Ascending aorta (tissue), 2 donors: ENCODE measurements at regions of chr9 and their contacts with region 1.

Region 1: GRCh38 chr9:38392235-38393127 is at the start of gene ALDH1B1:
- DNase-seq: peak; percentile 58 to 94
- H3K4me3 ChIP-seq: peak within 1 kb of the TSS; percentile 84 to 87
- H3K27ac ChIP-seq: peak within 1 kb of the TSS; percentile 98 to 99
- H3K4me1 ChIP-seq: peaks cover 31 to 47% of the 10 kb centered on the region in 2 donors
- H3K27me3 ChIP-seq: no peaks in the 10 kb centered on the region
- CTCF ChIP-seq: peak in 1 of 3 experiments; percentile 13
- total RNA-seq, gene ALDH1B1: 85.5 TPM

Region 2: DNA sequence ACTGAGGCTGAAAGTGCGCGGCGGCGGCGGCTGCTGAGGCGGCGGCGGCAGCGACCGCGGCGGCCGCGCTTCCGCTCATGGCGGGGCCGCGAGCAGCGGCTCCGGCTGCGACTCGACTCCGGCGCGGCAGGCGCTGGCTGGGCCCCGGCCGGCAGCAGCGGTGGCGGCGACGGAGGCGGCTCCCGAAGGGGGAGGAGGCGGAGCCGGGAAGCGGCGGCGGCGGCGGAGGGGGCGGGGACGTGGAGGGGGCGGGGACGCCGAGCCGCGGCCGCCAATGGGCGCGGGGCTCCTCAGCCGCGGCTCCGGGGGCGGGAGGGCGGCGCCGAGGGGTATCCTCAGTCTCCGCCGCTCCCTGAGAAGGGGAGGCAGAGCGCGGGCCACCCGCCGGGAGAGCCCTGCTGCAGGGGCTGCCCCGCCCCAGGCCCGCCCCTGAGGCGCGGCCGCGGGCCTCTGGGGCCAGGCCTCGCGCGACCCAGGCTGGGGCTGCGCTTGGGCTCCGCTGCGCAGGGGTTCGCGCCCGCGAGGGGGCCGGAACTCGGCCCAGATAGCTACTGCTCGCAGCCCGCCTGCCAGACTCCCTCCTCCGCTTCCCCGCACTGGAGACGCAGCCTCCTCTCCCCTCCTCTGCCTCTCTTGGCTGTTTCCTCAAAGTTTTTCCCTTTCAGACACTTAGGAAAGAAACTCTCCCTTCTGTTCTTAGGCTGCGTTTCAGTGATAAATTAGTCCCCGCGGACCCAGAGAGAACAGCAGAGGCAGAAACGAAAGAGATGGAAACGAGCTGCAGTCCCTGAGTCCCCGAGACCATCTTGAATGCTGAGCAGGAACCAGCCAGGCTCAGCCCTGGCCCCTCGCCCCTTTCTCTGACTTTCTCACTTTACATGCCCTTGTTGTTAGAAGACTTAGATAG is 1904.7 kb before region 1 on chr9:
- intact Hi-C with region 1: loop called (anchors 10 kb)
- DNase-seq: peak; percentile 63 to 95
- H3K4me3 ChIP-seq: peak overlapping the region; percentile 74 to 99
- H3K27ac ChIP-seq: peak overlapping the region; percentile 87 to 93
- H3K4me1 ChIP-seq: peaks cover 0 to 25% of the 10 kb centered on the region in 2 donors
- H3K27me3 ChIP-seq: no peaks in the 10 kb centered on the region
- CTCF ChIP-seq: peak in 1 of 3 experiments; percentile 19

Region 3: DNA sequence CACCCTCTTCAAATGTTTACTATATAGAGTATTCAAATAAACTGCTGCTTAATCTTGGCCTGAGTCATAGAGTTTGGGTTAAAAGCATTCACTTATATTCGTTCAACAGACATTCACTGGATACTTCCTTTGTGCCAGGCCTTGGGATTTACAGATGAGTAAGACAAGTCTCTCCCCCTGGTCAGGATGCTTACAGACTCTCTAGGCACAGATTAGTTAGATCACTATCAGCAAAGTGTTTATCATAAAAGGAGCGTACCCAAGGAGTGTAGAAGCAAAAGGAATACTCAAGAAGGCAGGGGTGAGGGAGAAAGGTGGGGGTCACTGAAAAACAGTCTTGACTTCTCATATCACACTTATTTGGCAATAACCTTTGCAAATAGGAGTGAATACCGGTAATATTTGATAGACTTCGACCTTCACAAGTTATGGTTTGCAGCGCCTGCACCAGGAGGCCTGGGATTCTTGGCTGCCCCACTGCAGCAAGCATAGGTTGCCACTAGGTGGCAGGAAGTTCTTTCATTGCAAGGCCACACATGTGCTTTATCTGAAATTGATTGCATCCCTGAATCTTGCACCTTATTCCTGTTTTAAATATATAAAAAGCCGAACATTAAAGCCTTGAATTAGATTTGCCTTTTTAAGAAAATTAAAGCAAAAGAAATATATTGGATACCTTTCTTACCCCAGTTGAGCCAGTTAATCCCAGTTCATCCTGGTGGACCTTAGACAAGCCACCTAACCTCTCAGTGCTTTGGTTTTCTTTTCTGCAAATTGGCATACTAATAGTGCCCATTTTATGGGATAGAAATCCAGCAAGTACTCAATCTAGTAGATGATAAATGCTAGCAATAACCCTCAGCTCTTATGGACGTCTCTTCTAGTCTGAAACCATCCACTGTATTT is 645.4 kb before region 1 on chr9:
- intact Hi-C with region 1: loop called (anchors 10 kb)
- DNase-seq: no peak
- H3K4me3 ChIP-seq: no peak overlapping the region
- H3K27ac ChIP-seq: no peak overlapping the region
- H3K4me1 ChIP-seq: no peaks in the 10 kb centered on the region
- H3K27me3 ChIP-seq: no peaks in the 10 kb centered on the region
- CTCF ChIP-seq: peak in 2 of 3 experiments; percentile 70 to 81

Region 4: GRCh38 chr9:37760416-37761161 is 631.9 kb before region 1 on chr9:
- intact Hi-C with region 1: no loop called
- DNase-seq: no peak
- H3K4me3 ChIP-seq: no peak overlapping the region
- H3K27ac ChIP-seq: no peak overlapping the region
- H3K4me1 ChIP-seq: no peaks in the 10 kb centered on the region
- H3K27me3 ChIP-seq: no peaks in the 10 kb centered on the region
- CTCF ChIP-seq: no peak

Region 5: GRCh38 chr9:38026021-38026809 is 366.3 kb before region 1 on chr9:
- intact Hi-C with region 1: loop called (anchors 5 kb)
- DNase-seq: peak; percentile 25 to 84
- H3K4me3 ChIP-seq: peak overlapping the region in 1 of 2 donors; percentile 8
- H3K27ac ChIP-seq: peak overlapping the region; percentile 68 to 85
- H3K4me1 ChIP-seq: peaks cover 22 to 56% of the 10 kb centered on the region in 2 donors
- H3K27me3 ChIP-seq: no peaks in the 10 kb centered on the region
- CTCF ChIP-seq: no peak

Region 6: DNA sequence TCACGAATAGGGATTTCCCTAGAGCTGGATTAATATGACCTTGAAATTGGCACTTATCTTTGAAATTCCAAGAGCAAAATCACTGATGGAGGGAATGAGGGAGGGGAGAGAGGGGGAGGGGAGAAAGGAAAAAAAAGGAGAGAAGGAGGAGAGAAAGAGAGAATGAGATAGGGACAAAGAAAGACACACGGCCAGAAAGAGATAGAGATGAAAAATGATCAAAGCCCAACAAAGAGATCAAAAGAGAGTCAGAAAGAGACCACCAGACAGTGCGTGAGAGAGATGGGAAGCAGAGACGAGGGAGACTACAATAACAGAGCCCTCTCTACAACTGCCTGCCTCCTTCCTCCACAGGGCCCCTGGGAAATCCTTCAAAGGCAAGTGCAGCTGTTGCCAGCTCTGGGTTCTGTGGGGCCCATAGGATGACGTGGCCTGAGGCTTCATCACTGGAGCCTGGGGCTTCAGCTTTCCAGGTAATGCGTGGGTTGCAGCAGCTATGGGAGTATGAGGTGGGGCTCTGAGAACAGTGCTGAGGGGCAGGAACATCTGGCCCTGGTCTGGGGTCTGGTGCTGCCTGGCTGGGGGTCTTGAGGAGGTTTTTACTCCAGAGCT is 265.1 kb before region 1 on chr9:
- intact Hi-C with region 1: no loop called
- DNase-seq: no peak
- H3K4me3 ChIP-seq: no peak overlapping the region
- H3K27ac ChIP-seq: no peak overlapping the region
- H3K4me1 ChIP-seq: no peaks in the 10 kb centered on the region
- H3K27me3 ChIP-seq: no peaks in the 10 kb centered on the region
- CTCF ChIP-seq: no peak

Region 7: DNA sequence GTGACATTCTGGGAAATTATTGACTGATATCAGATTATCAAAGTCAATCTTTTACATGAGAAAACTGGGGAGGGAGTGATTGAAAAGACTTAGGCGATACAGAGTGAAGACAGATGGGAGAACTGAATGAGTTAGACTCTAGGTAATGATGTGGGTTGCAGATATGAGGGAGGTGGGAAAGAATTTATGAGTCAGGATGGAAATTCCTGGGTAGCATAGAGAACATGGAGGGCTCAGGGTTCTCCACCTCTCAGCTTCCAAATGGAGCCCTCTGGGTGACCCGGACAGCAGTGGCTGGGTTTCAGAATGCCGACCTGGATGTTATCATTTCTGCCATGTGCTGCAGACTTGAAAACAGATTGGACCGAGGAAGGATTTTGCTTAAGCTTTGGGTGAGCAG is 248.1 kb before region 1 on chr9:
- intact Hi-C with region 1: no loop called
- DNase-seq: no peak
- H3K4me3 ChIP-seq: no peak overlapping the region
- H3K27ac ChIP-seq: no peak overlapping the region
- H3K4me1 ChIP-seq: peaks cover 0 to 5% of the 10 kb centered on the region in 2 donors
- H3K27me3 ChIP-seq: no peaks in the 10 kb centered on the region
- CTCF ChIP-seq: no peak

Region 8: GRCh38 chr9:38380872-38381534 is 11.5 kb before region 1 on chr9:
- intact Hi-C with region 1: loop called (anchors 1 kb)
- DNase-seq: peak in 1 of 2 donors; percentile 57
- H3K4me3 ChIP-seq: no peak overlapping the region
- H3K27ac ChIP-seq: peak overlapping the region; percentile 98
- H3K4me1 ChIP-seq: peaks cover 7 to 50% of the 10 kb centered on the region in 2 donors
- H3K27me3 ChIP-seq: no peaks in the 10 kb centered on the region
- CTCF ChIP-seq: no peak